ENCODE measurements at regions of chr7 and their contacts with region 1.

Region 1: DNA sequence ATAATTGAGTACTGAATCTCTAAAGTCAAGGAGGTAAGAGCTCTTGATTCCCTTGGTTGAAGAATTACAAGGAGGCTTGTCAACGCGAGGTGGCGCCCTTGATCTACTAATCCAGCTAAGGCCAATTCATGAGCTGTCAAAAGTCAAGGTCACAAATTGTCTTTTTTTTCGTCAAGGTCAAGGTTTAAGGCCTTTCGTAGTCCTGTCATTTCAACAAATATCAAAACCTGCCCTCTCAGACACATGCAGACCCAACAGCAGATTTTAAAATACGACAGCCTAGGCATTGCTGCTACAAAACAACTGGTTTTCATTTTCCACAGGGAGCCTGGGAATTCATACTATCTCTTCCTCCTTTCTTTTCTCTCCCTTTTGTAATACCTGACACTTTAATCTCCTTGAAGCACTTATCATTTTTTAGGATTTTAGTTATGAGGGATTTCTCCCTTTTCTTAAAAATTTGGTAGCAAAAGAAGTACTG is 3.6 kb downstream of the HOXA13 start:
- DNase-seq: peak; percentile 83
- H3K4me3 ChIP-seq: peak overlapping the region in 1 of 2 experiments; percentile 15; a peak in 1 of 4 replicates
- H3K27ac ChIP-seq: no peak overlapping the region
- H3K4me1 ChIP-seq: peaks cover 0 to 4% of the 10 kb centered on the region in 2 experiments; a peak in 1 of 4 replicates
- H3K27me3 ChIP-seq: peaks cover 82% of the 10 kb centered on the region
- CTCF ChIP-seq: peak; percentile 99
- EP300 ChIP-seq: no peak
- RAD21 ChIP-seq: peak; percentile 97

Region 2: DNA sequence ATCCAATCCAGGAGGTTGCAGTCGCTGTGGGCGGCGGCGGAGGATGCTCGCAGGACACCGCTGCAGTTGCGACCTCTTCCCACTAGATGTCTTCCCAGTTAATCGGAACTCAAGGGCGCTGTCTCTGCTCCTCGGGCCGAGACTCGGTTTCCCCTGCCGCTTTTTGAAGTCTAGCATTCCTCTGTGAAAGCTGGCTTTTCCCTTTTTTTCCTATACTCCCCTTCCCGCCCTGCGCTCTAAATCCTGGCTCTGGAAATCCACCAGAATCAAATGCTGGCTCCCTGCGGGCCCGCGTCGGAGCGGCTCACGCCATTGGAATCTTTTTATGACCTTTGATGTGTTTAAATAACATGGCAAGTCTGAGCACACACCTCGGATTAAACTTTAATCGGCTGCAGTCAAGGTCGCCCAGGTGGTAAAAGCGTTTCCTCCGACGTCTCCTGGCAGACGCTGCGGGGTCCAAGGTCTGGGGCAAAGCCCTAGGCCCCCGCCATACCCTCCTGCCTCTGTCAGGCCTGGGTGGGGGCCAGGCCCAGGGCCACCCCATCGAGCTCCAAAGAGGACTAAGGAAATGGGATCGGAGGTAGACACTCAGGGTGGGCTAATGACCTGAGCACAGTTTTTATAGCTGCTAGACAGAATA is 14.2 kb after region 1 on chr7:
- CTCF ChIA-PET with region 1: interaction called, 74 read pairs
- POLR2A ChIA-PET with region 1: interaction called, 4 read pairs
- DNase-seq: peak; percentile 85
- H3K4me3 ChIP-seq: peak overlapping the region; percentile 31 to 50
- H3K27ac ChIP-seq: no peak overlapping the region
- H3K4me1 ChIP-seq: peaks cover 0 to 16% of the 10 kb centered on the region in 2 experiments; a peak in 1 of 4 replicates
- H3K27me3 ChIP-seq: peaks cover 97% of the 10 kb centered on the region
- CTCF ChIP-seq: peak; percentile 90
- EP300 ChIP-seq: no peak
- RAD21 ChIP-seq: peak; percentile 72

Region 3: DNA sequence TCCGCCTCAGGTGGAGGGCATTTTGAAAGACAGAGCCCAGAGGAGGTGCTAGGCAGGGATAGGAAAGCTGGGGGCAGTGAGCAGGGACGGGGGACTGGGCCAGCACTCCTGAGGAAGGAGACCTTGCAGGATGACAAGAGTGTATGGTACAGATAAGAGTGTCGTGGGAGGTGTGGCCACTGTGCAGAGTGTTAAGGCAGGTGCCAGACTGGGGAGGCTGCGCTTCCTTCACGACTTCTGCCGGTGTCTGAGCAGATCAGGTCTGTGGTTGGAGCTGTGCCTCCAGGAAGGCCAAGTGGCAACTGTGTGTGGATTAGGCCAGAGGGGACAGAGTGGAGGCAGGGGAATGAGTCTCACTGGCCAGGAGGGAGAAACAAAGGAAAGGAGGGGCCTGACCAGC is 304.7 kb after region 1 on chr7:
- CTCF ChIA-PET with region 1: no interaction called
- POLR2A ChIA-PET with region 1: no interaction called
- DNase-seq: no peak
- H3K4me3 ChIP-seq: no peak overlapping the region
- H3K27ac ChIP-seq: no peak overlapping the region
- H3K4me1 ChIP-seq: no peaks in the 10 kb centered on the region
- H3K27me3 ChIP-seq: no peaks in the 10 kb centered on the region
- CTCF ChIP-seq: no peak
- EP300 ChIP-seq: no peak
- RAD21 ChIP-seq: no peak

Region 4: GRCh38 chr7:27605689-27606269 is 409.5 kb after region 1 on chr7:
- CTCF ChIA-PET with region 1: interaction called, 23 read pairs
- POLR2A ChIA-PET with region 1: no interaction called
- DNase-seq: no peak
- H3K4me3 ChIP-seq: peak overlapping the region in 1 of 2 experiments; percentile 1; a peak in 1 of 4 replicates
- H3K27ac ChIP-seq: peak overlapping the region; percentile 62 to 84
- H3K4me1 ChIP-seq: peaks cover 7 to 12% of the 10 kb centered on the region in 2 experiments; a peak in 3 of 4 replicates
- H3K27me3 ChIP-seq: no peaks in the 10 kb centered on the region
- CTCF ChIP-seq: peak; percentile 70
- EP300 ChIP-seq: no peak
- RAD21 ChIP-seq: peak; percentile 59

Region 5: DNA sequence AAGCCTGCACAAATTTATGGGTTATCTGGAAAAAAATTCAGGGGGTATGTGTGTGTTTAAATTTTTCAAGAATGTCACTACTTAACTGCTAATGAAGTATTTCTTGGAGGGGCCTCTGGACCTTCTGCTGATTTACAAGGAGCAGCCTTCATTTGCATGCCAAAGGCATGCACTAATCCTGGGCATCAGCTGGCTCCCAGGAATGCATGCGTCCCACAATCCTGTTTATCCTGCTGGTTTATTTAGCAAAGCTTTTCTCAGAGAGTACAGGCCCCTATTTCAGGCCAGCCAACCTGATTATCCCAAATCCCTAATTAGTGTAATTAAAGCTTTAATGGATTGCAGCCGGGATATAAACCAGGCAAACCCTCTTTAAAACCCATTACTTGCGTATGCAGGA is 714.0 kb after region 1 on chr7:
- CTCF ChIA-PET with region 1: interaction called, 10 read pairs
- POLR2A ChIA-PET with region 1: no interaction called
- DNase-seq: no peak
- H3K4me3 ChIP-seq: no peak overlapping the region
- H3K27ac ChIP-seq: no peak overlapping the region
- H3K4me1 ChIP-seq: no peaks in the 10 kb centered on the region
- H3K27me3 ChIP-seq: no peaks in the 10 kb centered on the region
- CTCF ChIP-seq: no peak
- EP300 ChIP-seq: no peak
- RAD21 ChIP-seq: no peak

Region 6: DNA sequence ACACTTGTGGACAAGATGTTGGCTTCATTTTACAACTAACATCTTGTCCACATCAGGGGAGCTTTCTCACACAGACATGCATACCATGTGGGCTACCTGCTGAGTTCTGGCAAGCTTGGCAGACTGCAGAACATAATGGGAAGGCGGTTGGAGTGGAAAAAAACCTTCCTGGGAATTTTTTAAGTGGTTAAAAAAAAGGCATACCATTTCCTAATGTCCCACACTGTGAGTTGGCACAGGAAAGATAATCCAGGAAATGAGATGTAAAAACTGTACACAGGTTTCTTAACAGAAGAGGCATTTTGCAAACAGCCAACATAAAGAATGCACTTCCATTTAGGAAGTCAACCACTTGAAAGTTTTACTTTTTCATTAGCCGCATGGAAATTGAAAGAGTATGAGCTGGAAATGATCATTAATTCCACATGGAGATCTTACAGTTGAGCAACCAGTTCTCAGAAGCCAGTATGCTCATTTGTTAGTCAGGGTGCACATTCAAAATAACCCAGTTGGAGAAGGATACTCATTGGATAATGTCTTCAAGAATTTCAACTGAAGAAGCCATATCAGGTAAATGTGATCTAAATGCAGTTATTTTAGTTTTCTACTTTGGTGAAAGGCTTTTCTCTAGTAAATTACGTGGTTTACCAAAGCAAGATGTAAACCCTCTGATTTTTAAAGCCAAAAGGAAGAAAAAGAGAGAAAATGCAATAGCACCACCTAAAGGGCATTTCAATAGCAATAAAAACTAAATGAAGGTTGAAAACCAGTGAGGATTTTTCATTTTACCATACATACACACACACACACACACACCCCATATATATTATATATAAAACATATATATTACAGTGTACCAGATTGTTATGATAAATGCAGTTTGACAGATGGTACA is 737.6 kb after region 1 on chr7:
- CTCF ChIA-PET with region 1: interaction called, 11 read pairs
- POLR2A ChIA-PET with region 1: no interaction called
- DNase-seq: no peak
- H3K4me3 ChIP-seq: no peak overlapping the region
- H3K27ac ChIP-seq: no peak overlapping the region
- H3K4me1 ChIP-seq: no peaks in the 10 kb centered on the region
- H3K27me3 ChIP-seq: no peaks in the 10 kb centered on the region
- CTCF ChIP-seq: peak; percentile 61
- EP300 ChIP-seq: no peak
- RAD21 ChIP-seq: peak; percentile 54

Region 7: GRCh38 chr7:28062197-28062991 is 866.1 kb after region 1 on chr7:
- CTCF ChIA-PET with region 1: interaction called, 11 read pairs
- POLR2A ChIA-PET with region 1: no interaction called
- DNase-seq: peak; percentile 62
- H3K4me3 ChIP-seq: no peak overlapping the region
- H3K27ac ChIP-seq: no peak overlapping the region
- H3K4me1 ChIP-seq: peaks cover 0 to 8% of the 10 kb centered on the region in 2 experiments; a peak in 2 of 4 replicates
- H3K27me3 ChIP-seq: no peaks in the 10 kb centered on the region
- CTCF ChIP-seq: peak; percentile 88
- EP300 ChIP-seq: no peak
- RAD21 ChIP-seq: peak; percentile 92

Region 8: GRCh38 chr7:28096713-28097112 is 900.4 kb after region 1 on chr7:
- CTCF ChIA-PET with region 1: interaction called, 28 read pairs
- POLR2A ChIA-PET with region 1: no interaction called
- DNase-seq: peak; percentile 84
- H3K4me3 ChIP-seq: no peak overlapping the region
- H3K27ac ChIP-seq: no peak overlapping the region
- H3K4me1 ChIP-seq: no peaks in the 10 kb centered on the region
- H3K27me3 ChIP-seq: no peaks in the 10 kb centered on the region
- CTCF ChIP-seq: peak; percentile 99
- EP300 ChIP-seq: no peak
- RAD21 ChIP-seq: peak; percentile 98

Measured in SK-N-SH (cell line).